Activated CD4-positive, alpha-beta memory T cell treated with anti-CD3 and anti-CD28 coated beads for 36 hours (primary cell): ENCODE measurements at regions of chr2 and their contacts with region 1.

Region 1: GRCh38 chr2:204177977-204178540 is 241.5 kb downstream of the ICOS start:
- DNase-seq: peak; percentile 82
- H3K4me3 Mint-ChIP-seq: no peak overlapping the region
- H3K27ac Mint-ChIP-seq: no peak overlapping the region
- H3K4me1 Mint-ChIP-seq: peaks cover 3% of the 10 kb centered on the region
- H3K27me3 Mint-ChIP-seq: peaks cover 8% of the 10 kb centered on the region

Region 2: DNA sequence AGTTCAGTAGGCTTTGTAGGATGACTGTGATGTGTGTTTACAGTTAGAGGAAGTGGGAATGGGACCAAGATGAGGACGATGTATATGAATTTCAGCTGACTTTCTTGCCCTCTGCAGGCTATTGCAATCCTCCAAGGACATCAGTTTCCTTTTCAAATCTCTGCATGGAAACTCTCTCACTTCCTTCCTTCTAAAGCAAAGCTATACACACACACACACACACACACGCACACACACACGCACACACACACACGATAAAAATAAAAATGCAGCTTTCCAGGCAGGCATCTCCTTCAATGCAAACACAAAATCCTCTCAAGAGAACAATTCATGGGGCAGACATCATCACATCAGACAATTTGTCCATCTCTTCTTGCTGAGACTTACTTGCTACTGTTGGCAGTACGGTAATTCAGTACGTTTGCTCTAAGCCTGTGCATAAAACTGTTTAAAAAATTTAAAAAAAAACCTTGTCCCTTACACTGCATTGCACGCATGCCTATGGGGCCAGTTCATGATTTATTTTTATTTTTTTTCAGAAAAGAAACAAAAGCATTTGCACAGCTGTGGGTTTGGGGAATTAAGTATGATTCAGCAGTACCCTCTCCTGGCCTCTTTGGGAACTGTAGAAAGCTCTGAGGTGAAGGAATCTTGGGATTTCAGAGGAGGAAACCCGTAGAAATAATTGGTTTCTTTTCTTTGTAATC is 268.6 kb before region 1 on chr2:
- CTCF ChIA-PET with region 1: no interaction called
- POLR2A ChIA-PET with region 1: no interaction called
- intact Hi-C with region 1: no loop called
- DNase-seq: peak; percentile 42
- H3K4me3 Mint-ChIP-seq: no peak overlapping the region
- H3K27ac Mint-ChIP-seq: peak overlapping the region; percentile 59
- H3K4me1 Mint-ChIP-seq: peaks cover 33% of the 10 kb centered on the region
- H3K27me3 Mint-ChIP-seq: peaks cover 4% of the 10 kb centered on the region

Region 3: GRCh38 chr2:203928849-203929248 is 249.2 kb before region 1 on chr2:
- CTCF ChIA-PET with region 1: interaction called, 9 read pairs
- POLR2A ChIA-PET with region 1: no interaction called
- intact Hi-C with region 1: loop called (anchors 5 kb)
- DNase-seq: no peak
- H3K4me3 Mint-ChIP-seq: no peak overlapping the region
- H3K27ac Mint-ChIP-seq: no peak overlapping the region
- H3K4me1 Mint-ChIP-seq: peaks cover 42% of the 10 kb centered on the region
- H3K27me3 Mint-ChIP-seq: peaks cover 2% of the 10 kb centered on the region

Region 4: GRCh38 chr2:204072443-204073324 is 105.4 kb before region 1 on chr2:
- CTCF ChIA-PET with region 1: interaction called, 146 read pairs
- POLR2A ChIA-PET with region 1: interaction called, 3 read pairs
- intact Hi-C with region 1: loop called (anchors 1 kb)
- DNase-seq: peak; percentile 85
- H3K4me3 Mint-ChIP-seq: no peak overlapping the region
- H3K27ac Mint-ChIP-seq: no peak overlapping the region
- H3K4me1 Mint-ChIP-seq: no peaks in the 10 kb centered on the region
- H3K27me3 Mint-ChIP-seq: peaks cover 3% of the 10 kb centered on the region

Region 5: DNA sequence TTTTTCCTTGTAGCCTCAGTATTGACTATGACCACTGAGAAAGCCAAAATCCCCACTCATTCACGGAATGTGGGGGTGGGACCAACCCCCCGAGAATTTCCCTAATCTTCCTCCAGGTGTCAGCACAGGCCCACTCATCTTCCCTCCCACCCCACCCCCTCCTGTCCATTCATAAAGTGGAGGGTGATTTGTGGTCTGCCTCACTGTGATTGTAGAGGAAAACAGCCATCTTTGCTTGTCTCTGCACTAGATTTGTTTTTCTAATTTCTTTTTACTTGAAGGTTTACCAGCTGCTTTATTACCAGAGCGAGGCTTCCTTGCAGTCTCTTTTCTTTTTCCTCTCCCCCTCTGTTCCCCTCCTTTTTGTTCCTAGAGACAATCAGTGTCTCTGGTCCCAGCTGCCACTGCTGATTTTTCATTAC is 69.7 kb before region 1 on chr2:
- CTCF ChIA-PET with region 1: interaction called, 46 read pairs
- POLR2A ChIA-PET with region 1: no interaction called
- intact Hi-C with region 1: loop called (anchors 1 kb)
- DNase-seq: peak; percentile 78
- H3K4me3 Mint-ChIP-seq: peak overlapping the region; percentile 55
- H3K27ac Mint-ChIP-seq: peak overlapping the region; percentile 90
- H3K4me1 Mint-ChIP-seq: peaks cover 71% of the 10 kb centered on the region
- H3K27me3 Mint-ChIP-seq: peaks cover 4% of the 10 kb centered on the region

Region 6: GRCh38 chr2:204145263-204145751 is 32.8 kb before region 1 on chr2:
- CTCF ChIA-PET with region 1: interaction called, 79 read pairs
- POLR2A ChIA-PET with region 1: no interaction called
- intact Hi-C with region 1: loop called (anchors 1 kb)
- DNase-seq: peak; percentile 88
- H3K4me3 Mint-ChIP-seq: peak overlapping the region; percentile 73
- H3K27ac Mint-ChIP-seq: no peak overlapping the region
- H3K4me1 Mint-ChIP-seq: peaks cover 10% of the 10 kb centered on the region
- H3K27me3 Mint-ChIP-seq: peaks cover 12% of the 10 kb centered on the region

Region 7: GRCh38 chr2:204159526-204159925 is 18.5 kb before region 1 on chr2:
- CTCF ChIA-PET with region 1: interaction called, 53 read pairs
- POLR2A ChIA-PET with region 1: no interaction called
- intact Hi-C with region 1: no loop called
- DNase-seq: no peak
- H3K4me3 Mint-ChIP-seq: no peak overlapping the region
- H3K27ac Mint-ChIP-seq: no peak overlapping the region
- H3K4me1 Mint-ChIP-seq: no peaks in the 10 kb centered on the region
- H3K27me3 Mint-ChIP-seq: no peaks in the 10 kb centered on the region

Region 8: DNA sequence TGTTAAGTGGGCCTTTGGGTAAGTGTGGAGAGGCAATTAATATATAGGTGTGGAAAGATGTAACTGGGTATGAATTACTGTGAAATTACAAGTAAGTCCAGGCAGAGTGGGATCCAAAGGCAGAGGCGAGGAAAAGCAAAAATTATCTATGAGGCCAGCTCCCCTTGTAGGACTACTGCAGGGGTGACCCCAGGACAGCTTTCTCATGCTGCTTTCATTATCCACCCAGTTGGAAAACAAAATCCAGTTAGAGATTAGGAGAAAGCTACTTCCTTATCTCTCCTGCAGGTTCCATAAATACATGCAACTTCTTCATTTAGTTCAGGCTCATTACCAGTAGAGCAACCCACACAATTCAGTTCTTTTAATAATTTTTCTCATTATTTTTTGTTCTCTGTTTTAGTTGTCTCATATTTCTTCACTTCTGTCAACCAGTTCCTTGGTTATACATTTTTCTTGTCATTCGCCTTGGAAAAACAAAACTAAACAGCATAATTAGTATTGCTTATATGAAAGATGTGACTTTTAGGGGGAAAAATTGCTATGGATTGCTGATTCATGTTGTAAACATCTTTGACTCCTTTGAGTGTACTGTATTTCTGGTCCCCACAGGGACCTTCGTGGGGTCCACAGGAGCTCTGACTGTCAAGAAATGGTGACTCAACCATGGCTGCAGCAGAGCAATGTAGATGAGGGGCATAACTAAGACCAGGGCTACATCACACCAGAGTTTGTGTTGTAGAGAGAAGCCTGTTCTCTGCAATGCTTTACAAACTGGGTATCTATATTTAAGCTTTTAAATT is 256.8 kb after region 1 on chr2:
- CTCF ChIA-PET with region 1: no interaction called
- POLR2A ChIA-PET with region 1: no interaction called
- intact Hi-C with region 1: no loop called
- DNase-seq: no peak
- H3K4me3 Mint-ChIP-seq: no peak overlapping the region
- H3K27ac Mint-ChIP-seq: no peak overlapping the region
- H3K4me1 Mint-ChIP-seq: no peaks in the 10 kb centered on the region
- H3K27me3 Mint-ChIP-seq: peaks cover 2% of the 10 kb centered on the region